Ascending aorta (tissue), 2 donors: ENCODE measurements at regions of chr3 and their contacts with region 1.

Region 1: GRCh38 chr3:160754855-160755747 is 930 bp upstream of the PPM1L start:
- DNase-seq: peak; percentile 85 to 96
- H3K4me3 ChIP-seq: peak overlapping the region; percentile 86 to 97
- H3K27ac ChIP-seq: peak overlapping the region; percentile 92 to 93
- H3K4me1 ChIP-seq: peaks cover 4 to 11% of the 10 kb centered on the region in 2 donors
- H3K27me3 ChIP-seq: no peaks in the 10 kb centered on the region
- CTCF ChIP-seq: no peak

Region 2: DNA sequence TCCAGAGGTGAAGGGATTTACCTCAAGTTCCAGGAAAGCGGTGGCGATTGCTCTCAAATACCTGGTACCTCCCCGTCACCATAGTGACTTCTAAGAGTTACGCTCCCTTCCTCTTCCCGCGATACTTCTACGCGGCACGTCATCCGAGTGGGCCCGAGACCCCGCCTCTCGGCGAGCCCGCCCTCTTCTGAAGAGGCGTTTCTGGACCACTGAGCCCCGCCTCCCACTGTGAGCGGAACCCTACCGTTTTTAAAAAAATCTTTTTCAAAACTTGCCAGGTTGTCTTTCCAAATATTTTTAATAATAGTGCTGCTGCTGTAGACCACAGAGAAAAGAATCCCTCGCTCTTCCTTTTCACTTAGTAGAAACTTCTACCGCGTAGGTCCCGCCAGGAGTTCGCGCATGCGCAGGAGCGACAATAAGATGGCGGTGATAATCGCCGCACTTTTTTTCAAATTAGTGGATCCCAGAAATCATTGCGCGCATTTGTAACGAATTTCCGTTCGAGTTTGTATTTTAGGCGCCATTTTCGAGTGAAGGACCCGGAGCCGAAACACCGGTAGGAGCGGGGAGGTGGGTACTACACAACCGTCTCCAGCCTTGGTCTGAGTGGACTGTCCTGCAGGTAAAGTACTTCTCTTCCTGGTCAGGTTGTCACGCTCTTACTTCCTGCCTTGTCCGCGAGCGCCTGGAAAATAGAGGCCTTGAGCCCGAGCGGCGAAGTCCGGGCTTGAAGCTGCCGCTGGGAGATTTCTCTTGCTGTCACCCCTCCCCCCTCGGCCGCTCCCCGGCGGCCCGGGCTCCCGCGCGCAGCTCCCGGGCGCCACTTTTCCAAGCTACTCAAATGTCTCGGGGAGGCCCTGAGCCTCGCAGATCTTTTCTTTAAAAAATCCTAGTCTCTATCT is 355.7 kb before region 1 on chr3 and contains the starts of genes IFT80 and SMC4:
- intact Hi-C with region 1: loop called (anchors 5 kb)
- DNase-seq: peak; percentile 79 to 98
- H3K4me3 ChIP-seq: peak within 1 kb of the TSS; percentile 64 to 73
- H3K27ac ChIP-seq: peak within 1 kb of the TSS; percentile 84 to 87
- H3K4me1 ChIP-seq: peaks cover 0 to 8% of the 10 kb centered on the region in 2 donors
- H3K27me3 ChIP-seq: no peaks in the 10 kb centered on the region
- CTCF ChIP-seq: no peak
- total RNA-seq, gene IFT80: 10.2 TPM
- total RNA-seq, gene SMC4: 5.0 TPM

Region 3: DNA sequence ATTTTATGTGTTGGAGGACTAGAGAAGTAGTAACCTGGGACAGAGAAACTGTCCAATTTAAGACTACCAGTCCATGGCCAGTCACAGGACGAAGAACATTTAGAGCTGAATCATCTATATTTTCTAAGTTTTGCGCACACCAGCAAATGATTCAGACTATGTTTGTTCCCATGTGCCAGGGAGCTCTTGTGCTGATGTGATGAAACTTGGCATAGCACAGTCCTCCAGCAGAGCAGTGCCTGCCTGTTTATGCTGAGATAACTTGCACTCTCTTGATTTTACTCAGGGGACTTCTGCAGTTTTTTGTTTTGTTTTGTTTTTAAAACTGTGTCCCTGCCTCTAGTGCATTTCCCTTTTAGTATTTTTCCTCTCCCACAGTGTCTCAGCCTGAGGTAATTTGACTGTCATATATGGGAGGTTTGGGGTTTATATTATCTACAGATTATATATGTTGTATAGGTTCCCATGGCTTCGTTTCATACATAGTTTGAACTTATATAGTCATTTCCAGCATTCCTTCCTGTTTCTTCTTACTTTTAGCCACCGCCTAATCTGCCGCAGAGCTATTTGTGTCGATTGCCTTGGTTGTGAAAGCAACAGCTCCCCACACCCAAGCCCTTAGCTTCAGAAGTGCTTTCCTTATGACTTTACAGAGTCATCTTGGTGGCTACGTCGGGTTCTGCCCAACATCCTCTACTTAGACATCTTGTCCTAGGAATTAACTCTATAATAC is 46.5 kb after region 1 on chr3:
- intact Hi-C with region 1: loop called (anchors 2 kb)
- DNase-seq: peak; percentile 25 to 77
- H3K4me3 ChIP-seq: peak overlapping the region in 1 of 2 donors; percentile 14
- H3K27ac ChIP-seq: peak overlapping the region; percentile 73 to 76
- H3K4me1 ChIP-seq: peaks cover 0 to 8% of the 10 kb centered on the region in 2 donors
- H3K27me3 ChIP-seq: no peaks in the 10 kb centered on the region
- CTCF ChIP-seq: no peak

Region 4: GRCh38 chr3:160869818-160870217 is 114.7 kb after region 1 on chr3:
- intact Hi-C with region 1: loop called (anchors 5 kb)
- DNase-seq: no peak
- H3K4me3 ChIP-seq: peak overlapping the region in 1 of 2 donors; percentile 11
- H3K27ac ChIP-seq: no peak overlapping the region
- H3K4me1 ChIP-seq: peaks cover 0 to 5% of the 10 kb centered on the region in 2 donors
- H3K27me3 ChIP-seq: no peaks in the 10 kb centered on the region
- CTCF ChIP-seq: no peak

Region 5: GRCh38 chr3:160921020-160921635 is 166.0 kb after region 1 on chr3:
- intact Hi-C with region 1: no loop called
- DNase-seq: no peak
- H3K4me3 ChIP-seq: no peak overlapping the region
- H3K27ac ChIP-seq: no peak overlapping the region
- H3K4me1 ChIP-seq: no peaks in the 10 kb centered on the region
- H3K27me3 ChIP-seq: no peaks in the 10 kb centered on the region
- CTCF ChIP-seq: peak; percentile 59 to 92 (median 79)

Region 6: GRCh38 chr3:161104561-161105551 is 349.8 kb after region 1 on chr3 and contains the start of gene B3GALNT1:
- intact Hi-C with region 1: loop called (anchors 1 kb)
- DNase-seq: peak in 1 of 2 donors; percentile 65
- H3K4me3 ChIP-seq: peak within 1 kb of the TSS; percentile 64 to 71
- H3K27ac ChIP-seq: peak within 1 kb of the TSS; percentile 70 to 78
- H3K4me1 ChIP-seq: peaks cover 0 to 8% of the 10 kb centered on the region in 2 donors
- H3K27me3 ChIP-seq: no peaks in the 10 kb centered on the region
- CTCF ChIP-seq: peak in 1 of 3 experiments; percentile 4
- total RNA-seq, gene B3GALNT1: 55.6 TPM

Region 7: DNA sequence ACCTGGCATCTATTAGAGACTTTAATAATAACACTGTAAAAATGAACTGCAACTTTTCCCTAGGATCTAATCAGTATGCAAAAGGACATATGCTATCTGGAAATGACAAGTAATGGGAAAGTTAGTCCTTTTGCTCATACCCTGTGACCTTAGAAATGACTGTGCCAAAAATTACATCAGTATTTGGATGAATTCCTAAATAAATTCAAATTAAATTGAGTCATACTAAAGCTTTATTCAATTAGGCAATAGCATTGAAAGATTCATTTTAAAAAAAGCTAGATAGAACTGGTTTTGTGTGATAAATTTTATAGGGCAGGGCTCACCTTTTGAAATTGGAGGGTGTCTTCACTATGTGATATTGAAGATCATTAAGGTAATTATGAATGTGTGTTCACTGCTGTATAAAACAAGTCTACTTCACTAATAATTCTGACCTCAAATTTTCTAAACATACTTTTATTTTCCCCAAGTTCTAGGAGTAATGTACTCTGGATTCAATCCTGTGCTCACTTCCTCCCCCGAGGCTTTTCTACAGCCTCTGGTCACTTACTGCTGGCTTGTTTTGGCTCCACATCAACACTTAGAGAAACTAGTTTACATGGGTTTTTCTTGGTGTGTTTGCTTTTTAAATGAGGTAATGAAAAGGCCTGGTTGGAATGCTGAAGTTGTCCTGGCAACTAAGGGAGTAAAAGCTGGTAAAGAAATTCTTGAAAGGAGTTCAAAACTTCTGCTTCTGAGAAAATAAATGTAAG is 660.6 kb after region 1 on chr3:
- intact Hi-C with region 1: loop called (anchors 5 kb)
- DNase-seq: no peak
- H3K4me3 ChIP-seq: no peak overlapping the region
- H3K27ac ChIP-seq: peak overlapping the region; percentile 43 to 62
- H3K4me1 ChIP-seq: peaks cover 2 to 13% of the 10 kb centered on the region in 2 donors
- H3K27me3 ChIP-seq: no peaks in the 10 kb centered on the region
- CTCF ChIP-seq: no peak